ENCODE measurements at regions of chr12 and their contacts with region 1.

Region 1: DNA sequence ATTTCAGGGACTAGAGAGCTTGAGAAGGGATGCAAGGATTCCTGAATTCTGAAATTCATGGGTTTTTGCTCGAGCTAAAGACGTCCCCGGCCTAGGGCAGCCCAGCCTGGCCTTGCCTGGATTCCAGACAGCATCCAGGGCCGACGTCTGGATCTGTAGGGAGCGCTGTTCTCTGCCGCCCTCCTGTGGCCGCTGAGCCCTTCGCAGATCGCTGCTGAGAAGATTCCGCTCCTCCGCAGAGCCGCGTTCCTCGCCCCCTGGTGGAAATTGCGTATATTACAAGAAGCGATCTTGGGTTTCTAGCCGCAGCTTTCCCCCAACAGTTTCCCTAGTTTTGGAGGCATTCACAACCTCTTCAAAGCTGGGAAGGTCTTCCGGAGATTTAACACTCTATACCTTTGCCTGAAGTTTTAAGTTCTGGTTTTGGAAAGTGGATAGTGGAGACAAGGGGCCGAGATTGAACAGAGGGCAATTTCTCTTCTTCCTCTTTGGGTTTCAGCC is 5.1 kb downstream of the CISTR start:
- DNase-seq: peak; percentile 86
- H3K4me3 ChIP-seq: no peak overlapping the region
- H3K27ac ChIP-seq: no peak overlapping the region
- H3K27me3 ChIP-seq: peaks cover 68% of the 10 kb centered on the region
- CTCF ChIP-seq: peak; percentile 100

Region 2: DNA sequence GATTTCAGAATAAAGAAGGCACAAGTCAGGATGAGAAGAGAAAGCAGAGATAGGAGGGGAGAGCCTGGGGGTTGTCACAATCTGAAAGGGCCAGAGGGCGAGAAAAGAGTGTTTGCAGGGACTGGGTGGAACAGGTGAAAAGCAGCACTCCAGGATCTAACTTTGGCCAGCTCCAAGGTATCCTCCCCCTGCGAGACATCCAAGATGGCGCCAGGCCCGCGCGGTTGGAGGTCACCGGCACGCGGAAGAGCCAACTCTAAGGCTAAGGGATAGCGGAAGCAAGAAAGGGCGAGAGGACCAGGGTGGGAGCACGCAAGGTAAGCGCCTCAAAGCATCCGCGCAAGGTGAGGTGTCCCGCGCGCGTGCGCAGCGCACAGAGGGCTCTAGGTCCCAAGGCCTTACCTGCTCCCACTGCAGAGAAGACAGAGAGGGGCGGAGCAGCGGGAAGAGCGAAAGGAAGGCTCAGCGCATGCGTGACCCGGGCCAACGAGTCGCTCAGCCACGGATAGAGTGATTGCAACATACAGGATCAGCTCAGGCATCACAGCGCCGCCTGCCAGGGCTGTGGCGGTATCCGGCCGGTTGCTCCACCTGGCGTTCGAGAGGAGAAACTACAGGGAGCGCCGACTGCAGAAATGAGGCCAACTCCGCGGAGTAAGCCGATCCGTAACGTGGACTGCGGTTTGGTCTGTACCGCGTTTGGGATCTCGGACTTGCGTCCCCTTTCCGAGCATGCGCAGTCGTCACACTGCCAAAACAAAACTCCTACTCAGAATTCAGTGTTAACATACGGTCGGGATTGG is 70.8 kb before region 1 on chr12 and contains the start of gene ATP5MC2:
- CTCF ChIA-PET with region 1: interaction called, 10 read pairs
- POLR2A ChIA-PET with region 1: no interaction called
- DNase-seq: peak; percentile 99
- H3K4me3 ChIP-seq: peak within 1 kb of the TSS; percentile 94
- H3K27ac ChIP-seq: peak within 1 kb of the TSS; percentile 91
- H3K27me3 ChIP-seq: no peaks in the 10 kb centered on the region
- CTCF ChIP-seq: peak; percentile 100
- polyA plus RNA-seq, gene ATP5MC2: 261 and 433 TPM in 2 replicates

Region 3: DNA sequence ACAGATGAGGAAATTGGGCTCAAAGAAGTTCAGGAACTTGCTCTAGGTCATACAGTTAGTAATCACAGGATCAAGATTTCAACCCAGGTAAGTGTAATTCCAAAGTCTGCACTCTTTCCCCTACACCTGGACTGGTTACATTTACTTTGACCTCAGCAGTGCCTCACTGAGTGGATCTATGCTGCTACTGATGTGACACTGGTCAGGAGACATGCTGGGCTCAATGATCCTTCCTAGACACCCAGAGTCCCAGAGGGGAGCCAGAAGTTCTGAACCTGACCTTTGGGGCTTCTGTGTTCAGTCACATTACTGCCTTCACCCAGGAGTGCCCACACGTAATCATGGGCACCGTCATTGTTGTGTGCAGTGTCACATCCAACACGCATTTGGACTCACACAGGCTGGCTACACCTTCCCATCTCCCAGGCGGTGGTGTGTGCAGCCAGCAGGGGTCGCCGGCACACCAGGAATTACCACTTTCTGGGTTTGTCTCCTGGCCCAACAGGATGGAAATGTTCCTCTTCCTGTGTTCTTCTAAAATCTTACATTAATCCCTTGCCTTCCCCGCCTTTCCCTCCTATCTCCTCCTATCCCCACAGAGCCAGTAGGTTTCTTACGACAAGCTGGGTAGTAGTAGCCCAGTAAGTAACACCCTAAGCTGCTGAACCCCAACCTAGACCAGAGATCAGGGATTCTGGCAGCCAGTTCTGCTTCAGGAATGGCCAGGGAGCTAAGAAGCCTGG is 45.0 kb before region 1 on chr12:
- CTCF ChIA-PET with region 1: interaction called, 518 read pairs
- POLR2A ChIA-PET with region 1: interaction called, 6 read pairs
- DNase-seq: peak; percentile 30
- H3K4me3 ChIP-seq: no peak overlapping the region
- H3K27ac ChIP-seq: no peak overlapping the region
- H3K27me3 ChIP-seq: peaks cover 52% of the 10 kb centered on the region
- CTCF ChIP-seq: peak; percentile 95

Region 4: DNA sequence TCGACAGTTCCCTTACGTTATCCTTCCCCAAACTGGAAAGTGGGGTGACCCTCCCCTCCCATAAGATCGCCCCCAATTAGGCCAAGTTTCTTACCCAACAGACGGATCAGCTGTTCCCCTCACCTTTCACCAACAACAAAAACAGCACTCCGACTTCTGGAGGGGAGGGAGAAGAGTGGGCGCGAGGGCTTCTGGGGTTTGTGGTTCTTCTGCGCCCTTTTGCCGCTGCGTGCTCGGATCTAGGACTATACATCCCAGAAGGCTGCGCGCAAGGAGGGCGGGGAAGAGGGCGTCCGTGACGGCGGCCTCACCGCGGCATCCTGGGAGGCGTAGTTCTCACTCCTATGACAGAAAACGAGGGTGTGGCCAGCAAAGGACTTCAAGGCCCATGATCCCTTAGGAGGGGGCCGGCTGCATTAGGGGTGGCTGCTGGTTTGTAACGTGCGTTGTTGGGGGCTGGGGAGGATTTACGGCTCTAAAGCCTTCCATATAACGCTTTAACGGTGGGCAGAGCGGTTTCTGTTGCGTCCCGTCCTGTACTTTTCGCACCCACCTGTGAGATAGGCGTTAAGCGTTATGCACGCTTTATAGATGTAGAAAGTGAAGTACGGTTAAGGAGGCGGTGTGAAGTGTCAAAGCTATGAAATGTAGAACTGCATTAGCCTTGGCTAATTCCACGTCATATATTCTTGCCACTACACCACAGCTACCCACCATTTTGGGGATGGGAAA is 19.2 kb before region 1 on chr12 and contains the start of gene CALCOCO1:
- CTCF ChIA-PET with region 1: interaction called, 439 read pairs
- POLR2A ChIA-PET with region 1: no interaction called
- DNase-seq: peak; percentile 93
- H3K4me3 ChIP-seq: peak within 1 kb of the TSS; percentile 98
- H3K27ac ChIP-seq: peak within 1 kb of the TSS; percentile 11
- H3K27me3 ChIP-seq: no peaks in the 10 kb centered on the region
- CTCF ChIP-seq: no peak
- polyA plus RNA-seq, gene CALCOCO1: 124 and 128 TPM in 2 replicates

Region 5: DNA sequence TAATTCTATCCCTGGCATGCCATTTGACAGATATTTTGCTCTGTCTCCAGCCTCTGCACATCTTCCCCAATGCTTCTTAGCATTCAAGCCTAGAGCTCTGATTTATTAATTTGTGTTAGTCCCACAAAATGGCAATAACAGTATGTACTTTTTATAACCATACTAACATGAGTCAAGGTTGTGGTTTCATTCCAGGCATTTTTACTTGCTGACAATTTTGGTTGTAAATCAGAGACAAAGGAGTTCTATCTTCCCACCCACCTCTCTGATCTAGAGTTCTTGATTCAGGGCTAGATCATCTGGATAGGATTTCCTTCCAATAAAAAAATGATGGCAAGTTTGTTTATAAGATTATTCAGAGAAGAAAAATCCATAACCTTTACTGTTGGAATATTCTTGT is 23.6 kb after region 1 on chr12:
- CTCF ChIA-PET with region 1: interaction called, 13 read pairs
- POLR2A ChIA-PET with region 1: no interaction called
- DNase-seq: peak; percentile 84
- H3K4me3 ChIP-seq: no peak overlapping the region
- H3K27ac ChIP-seq: peak overlapping the region; percentile 3
- H3K27me3 ChIP-seq: no peaks in the 10 kb centered on the region
- CTCF ChIP-seq: no peak

Region 6: DNA sequence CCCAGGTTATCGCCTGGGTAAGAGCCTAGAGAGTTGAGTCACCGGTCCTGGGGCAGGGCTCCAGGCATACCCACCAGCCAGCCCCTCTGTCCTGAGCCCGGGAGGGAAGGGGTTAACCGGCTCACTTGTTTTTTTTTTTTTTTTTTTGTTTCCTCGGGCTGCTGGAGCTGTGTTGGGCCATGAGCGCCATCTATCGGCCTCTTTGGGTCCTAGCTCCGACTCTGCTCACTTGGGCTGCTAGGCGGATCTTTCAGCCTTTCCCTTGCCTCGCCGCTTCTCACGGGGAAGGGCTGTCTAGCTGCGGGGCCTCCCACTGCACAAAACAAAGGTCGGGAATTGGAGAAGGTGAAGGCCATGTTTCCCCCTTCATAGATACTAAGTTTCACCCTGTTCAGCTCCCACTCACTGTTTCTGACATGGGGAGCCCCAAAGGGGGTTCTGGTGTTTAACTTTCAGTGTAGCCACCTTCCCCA is 444.9 kb after region 1 on chr12:
- CTCF ChIA-PET with region 1: interaction called, 14 read pairs
- POLR2A ChIA-PET with region 1: no interaction called
- DNase-seq: peak; percentile 60
- H3K4me3 ChIP-seq: no peak overlapping the region
- H3K27ac ChIP-seq: no peak overlapping the region
- H3K27me3 ChIP-seq: peaks cover 13% of the 10 kb centered on the region
- CTCF ChIP-seq: peak; percentile 92

Measured in AG04450 (cell line).